ENCODE measurements at regions of chr2 and their contacts with region 1.

Region 1: DNA sequence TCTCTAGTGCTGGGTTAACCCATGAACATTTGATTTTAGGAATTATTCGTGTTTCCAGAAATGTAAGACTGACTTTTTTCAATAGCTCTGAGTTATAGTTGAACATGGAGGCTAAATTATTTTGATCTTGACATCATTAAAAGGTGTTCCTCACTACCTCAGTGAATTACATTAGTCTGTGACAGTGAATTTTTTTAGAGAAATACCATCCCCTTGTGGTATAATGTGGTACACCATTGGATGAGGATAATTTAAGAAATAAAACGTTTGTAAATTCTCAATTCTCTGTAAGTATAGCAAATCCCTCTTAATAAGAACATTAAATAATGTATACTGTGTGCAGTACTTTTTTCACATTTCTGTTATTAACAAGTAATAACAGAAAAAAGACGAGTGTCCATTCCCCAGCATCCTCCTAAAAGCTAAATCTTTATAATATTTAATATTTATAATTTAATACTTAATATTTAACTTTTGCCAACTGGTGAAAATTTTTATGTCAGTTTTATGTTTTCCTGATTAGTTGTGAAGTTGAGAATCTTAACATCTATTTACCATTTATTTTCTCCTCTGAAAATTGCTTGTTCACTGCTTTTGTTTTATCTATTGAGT is 70.3 kb upstream of the CWC22 start:
- DNase-seq: no peak
- ATAC-seq: no peak
- H3K4me3 Mint-ChIP-seq: no peak overlapping the region
- H3K27ac Mint-ChIP-seq: no peak overlapping the region
- H3K4me1 Mint-ChIP-seq: no peaks in the 10 kb centered on the region
- H3K27me3 Mint-ChIP-seq: peaks cover 2% of the 10 kb centered on the region

Region 2: GRCh38 chr2:179410552-179411356 is 666.6 kb before region 1 on chr2:
- CTCF ChIA-PET with region 1: no interaction called
- POLR2A ChIA-PET with region 1: no interaction called
- intact Hi-C with region 1: loop called in 1 of 2 experiments (anchors 10 kb)
- DNase-seq: peak; percentile 43
- ATAC-seq: peak; percentile 47
- H3K4me3 Mint-ChIP-seq: no peak overlapping the region
- H3K27ac Mint-ChIP-seq: no peak overlapping the region
- H3K4me1 Mint-ChIP-seq: no peaks in the 10 kb centered on the region
- H3K27me3 Mint-ChIP-seq: peaks cover 26% of the 10 kb centered on the region

Region 3: GRCh38 chr2:179842498-179843153 is 234.8 kb before region 1 on chr2:
- CTCF ChIA-PET with region 1: no interaction called
- POLR2A ChIA-PET with region 1: no interaction called
- intact Hi-C with region 1: loop called in 1 of 2 experiments (anchors 10 kb)
- DNase-seq: peak; percentile 42
- ATAC-seq: no peak
- H3K4me3 Mint-ChIP-seq: no peak overlapping the region
- H3K27ac Mint-ChIP-seq: no peak overlapping the region
- H3K4me1 Mint-ChIP-seq: no peaks in the 10 kb centered on the region
- H3K27me3 Mint-ChIP-seq: peaks cover 2% of the 10 kb centered on the region

Region 4: DNA sequence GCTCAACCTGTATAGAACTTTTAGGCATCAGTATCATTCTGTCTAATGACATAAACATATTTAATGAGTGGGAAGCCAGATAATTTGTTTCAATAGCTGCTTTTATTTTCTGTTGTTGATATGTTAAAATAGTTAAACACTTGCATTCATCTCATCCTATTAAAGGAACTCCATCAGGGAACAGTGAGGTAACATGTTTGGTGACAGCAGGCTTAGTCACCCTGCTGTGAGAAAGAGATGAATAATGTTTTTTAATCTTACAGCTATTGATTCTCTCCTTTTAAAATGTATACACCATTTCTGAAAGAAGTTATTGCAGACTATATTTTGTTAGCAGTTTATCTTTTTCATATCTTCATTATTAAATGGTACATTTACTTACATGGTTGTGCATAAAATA is 53.0 kb after region 1 on chr2:
- CTCF ChIA-PET with region 1: no interaction called
- POLR2A ChIA-PET with region 1: no interaction called
- intact Hi-C with region 1: no loop called
- DNase-seq: no peak
- ATAC-seq: no peak
- H3K4me3 Mint-ChIP-seq: no peak overlapping the region
- H3K27ac Mint-ChIP-seq: no peak overlapping the region
- H3K4me1 Mint-ChIP-seq: peaks cover 1% of the 10 kb centered on the region
- H3K27me3 Mint-ChIP-seq: peaks cover 10% of the 10 kb centered on the region

Measured in activated CD4-positive, alpha-beta T cell treated with anti-CD3 and anti-CD28 coated beads for 36 hours (primary cell).